ENCODE measurements at regions of chr6 and their contacts with region 1.

Region 1: DNA sequence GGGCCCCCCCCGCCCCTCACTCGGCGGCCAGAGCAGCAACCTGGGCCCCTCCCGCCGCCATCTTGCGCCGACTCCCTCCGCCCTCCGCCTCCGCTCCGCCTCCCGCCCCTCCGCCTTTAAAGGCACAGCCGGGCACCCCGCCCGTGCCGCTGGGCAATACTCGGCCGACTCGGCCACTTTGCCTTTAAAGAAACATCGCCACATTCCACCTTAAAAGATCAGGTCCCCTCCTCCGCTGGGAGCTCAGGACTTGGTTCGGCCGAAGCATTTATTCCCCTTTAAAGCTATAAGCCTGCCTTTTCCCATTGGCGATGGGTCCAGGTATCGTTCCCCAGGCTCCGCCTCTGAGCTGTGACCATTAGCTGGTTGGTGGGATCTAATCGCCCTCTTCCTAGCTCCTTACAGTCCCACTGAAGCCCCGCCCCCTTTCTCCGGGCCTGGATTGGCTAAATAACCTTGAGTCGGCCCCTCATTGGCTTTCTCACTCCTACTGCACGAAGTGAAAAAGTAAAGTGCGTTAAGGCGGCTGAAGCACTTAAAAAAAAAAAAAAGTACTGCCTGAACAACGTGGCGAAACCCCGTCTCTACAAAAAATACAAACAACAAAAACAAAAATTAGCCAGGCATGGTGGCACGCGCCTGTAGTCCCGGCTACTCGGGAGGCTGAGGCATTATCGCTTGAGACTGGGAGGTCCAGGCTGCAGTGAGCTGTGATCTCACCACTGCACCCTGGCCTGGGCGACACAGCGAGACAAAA is at the start of gene ZBTB22:
- DNase-seq: peak; percentile 94
- ATAC-seq: peak; percentile 69
- H3K4me3 Mint-ChIP-seq: peak within 1 kb of the TSS; percentile 100
- H3K27ac Mint-ChIP-seq: peak within 1 kb of the TSS; percentile 98
- H3K4me1 Mint-ChIP-seq: peaks cover 54% of the 10 kb centered on the region
- H3K27me3 Mint-ChIP-seq: no peaks in the 10 kb centered on the region
- total RNA-seq, gene ZBTB22: 20.9 to 24.5 TPM

Region 2: GRCh38 chr6:31474871-31475286 is 1843.0 kb before region 1 on chr6:
- POLR2A ChIA-PET with region 1: no interaction called
- DNase-seq: no peak
- ATAC-seq: no peak
- H3K4me3 Mint-ChIP-seq: no peak overlapping the region
- H3K27ac Mint-ChIP-seq: no peak overlapping the region
- H3K4me1 Mint-ChIP-seq: peaks cover 16% of the 10 kb centered on the region
- H3K27me3 Mint-ChIP-seq: no peaks in the 10 kb centered on the region

Region 3: DNA sequence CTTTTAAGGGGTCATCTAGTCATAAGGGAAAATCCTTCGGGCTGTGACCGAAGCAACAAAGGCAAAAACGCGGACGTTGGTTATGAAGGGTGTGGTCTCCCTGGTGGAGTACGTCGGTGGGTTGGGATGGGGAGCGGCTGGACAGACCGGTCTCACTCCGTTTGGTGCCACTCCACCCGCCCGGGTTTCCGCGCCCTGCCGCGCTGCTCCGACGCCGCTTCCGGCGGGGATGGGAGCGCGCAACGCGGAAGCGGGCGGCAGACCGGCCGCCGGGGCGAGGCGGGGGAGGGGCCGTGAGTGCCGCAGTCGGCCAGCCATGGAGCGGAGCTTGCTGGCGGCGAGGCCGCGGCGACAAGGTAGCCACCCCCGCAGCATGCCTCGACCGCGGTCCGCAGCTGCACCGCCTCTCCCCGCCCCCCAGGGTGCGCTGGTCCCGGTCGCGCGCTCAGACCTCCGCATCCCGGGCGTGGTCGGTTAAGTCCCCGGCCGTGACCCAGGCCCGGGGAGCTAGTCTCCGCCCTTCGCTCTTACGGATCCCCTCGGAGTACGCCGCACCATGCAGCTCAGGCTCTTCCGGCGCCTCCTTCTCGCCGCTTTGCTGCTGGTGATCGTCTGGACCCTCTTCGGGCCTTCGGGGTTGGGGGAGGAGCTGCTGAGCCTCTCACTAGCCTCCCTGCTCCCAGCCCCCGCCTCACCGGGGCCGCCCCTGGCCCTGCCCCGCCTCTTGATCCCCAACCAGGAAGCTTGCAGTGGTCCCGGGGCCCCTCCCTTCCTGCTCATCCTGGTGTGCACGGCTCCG is 40.8 kb before region 1 on chr6 and contains the start of gene B3GALT4:
- POLR2A ChIA-PET with region 1: interaction called, 20 read pairs
- DNase-seq: peak; percentile 86
- ATAC-seq: peak; percentile 76
- H3K4me3 Mint-ChIP-seq: peak within 1 kb of the TSS; percentile 97
- H3K27ac Mint-ChIP-seq: peak within 1 kb of the TSS; percentile 98
- H3K4me1 Mint-ChIP-seq: peaks cover 46% of the 10 kb centered on the region
- H3K27me3 Mint-ChIP-seq: no peaks in the 10 kb centered on the region
- total RNA-seq, gene B3GALT4: 32.0 to 35.4 TPM

Region 4: DNA sequence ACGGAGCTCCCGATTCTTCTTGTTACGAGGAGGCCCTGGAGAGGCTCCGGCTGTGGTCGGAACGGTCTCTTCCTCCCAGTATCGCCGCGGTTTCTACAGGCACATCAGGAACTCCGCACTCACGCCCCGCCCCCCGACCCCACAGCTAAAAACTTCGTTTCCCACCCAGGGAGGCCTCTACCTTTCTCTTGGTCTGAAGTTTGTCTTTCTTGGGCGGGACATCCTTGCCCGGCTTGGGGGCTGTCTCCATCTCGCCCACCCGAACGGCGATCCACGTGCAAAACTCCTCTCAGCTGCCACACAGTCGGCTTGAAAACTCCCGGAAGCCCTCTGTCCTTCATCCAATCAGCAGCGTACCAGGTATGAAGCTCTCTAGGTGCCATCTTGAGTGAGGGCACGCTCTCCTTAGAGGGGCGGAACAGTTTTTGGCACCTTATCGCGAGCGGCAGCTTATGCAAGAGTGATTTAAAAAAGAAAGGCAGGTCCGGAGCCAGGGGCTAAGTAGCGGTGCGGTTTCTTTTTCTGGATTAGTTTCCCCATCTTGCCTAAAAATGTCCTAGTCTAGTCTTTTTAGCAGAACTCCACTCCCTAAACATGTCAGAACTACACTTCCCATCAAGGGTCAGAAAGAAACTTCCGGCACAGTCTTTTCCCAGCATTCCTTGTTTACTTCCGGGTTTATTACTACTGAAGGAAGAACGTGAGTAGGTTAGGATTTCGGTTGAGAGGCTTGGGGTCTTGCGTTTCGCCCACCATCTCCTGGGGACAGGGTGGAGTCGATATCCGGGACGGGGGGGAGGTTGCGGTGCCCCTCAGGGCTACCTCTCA is 28.7 kb before region 1 on chr6 and contains the starts of genes PFDN6 and WDR46:
- POLR2A ChIA-PET with region 1: interaction called, 21 read pairs
- DNase-seq: peak; percentile 74
- ATAC-seq: peak; percentile 97
- H3K4me3 Mint-ChIP-seq: peak within 1 kb of the TSS; percentile 96
- H3K27ac Mint-ChIP-seq: peak within 1 kb of the TSS; percentile 90
- H3K4me1 Mint-ChIP-seq: peaks cover 31% of the 10 kb centered on the region
- H3K27me3 Mint-ChIP-seq: no peaks in the 10 kb centered on the region
- total RNA-seq, gene PFDN6: 53.3 to 54.7 TPM
- total RNA-seq, gene WDR46: 50.0 to 58.0 TPM

Region 5: GRCh38 chr6:33299237-33299944 is 18.5 kb before region 1 on chr6:
- POLR2A ChIA-PET with region 1: interaction called, 44 read pairs
- DNase-seq: peak; percentile 94
- ATAC-seq: peak; percentile 85
- H3K4me3 Mint-ChIP-seq: peak overlapping the region; percentile 99
- H3K27ac Mint-ChIP-seq: peak overlapping the region; percentile 99
- H3K4me1 Mint-ChIP-seq: peaks cover 20% of the 10 kb centered on the region
- H3K27me3 Mint-ChIP-seq: no peaks in the 10 kb centered on the region

Region 6: DNA sequence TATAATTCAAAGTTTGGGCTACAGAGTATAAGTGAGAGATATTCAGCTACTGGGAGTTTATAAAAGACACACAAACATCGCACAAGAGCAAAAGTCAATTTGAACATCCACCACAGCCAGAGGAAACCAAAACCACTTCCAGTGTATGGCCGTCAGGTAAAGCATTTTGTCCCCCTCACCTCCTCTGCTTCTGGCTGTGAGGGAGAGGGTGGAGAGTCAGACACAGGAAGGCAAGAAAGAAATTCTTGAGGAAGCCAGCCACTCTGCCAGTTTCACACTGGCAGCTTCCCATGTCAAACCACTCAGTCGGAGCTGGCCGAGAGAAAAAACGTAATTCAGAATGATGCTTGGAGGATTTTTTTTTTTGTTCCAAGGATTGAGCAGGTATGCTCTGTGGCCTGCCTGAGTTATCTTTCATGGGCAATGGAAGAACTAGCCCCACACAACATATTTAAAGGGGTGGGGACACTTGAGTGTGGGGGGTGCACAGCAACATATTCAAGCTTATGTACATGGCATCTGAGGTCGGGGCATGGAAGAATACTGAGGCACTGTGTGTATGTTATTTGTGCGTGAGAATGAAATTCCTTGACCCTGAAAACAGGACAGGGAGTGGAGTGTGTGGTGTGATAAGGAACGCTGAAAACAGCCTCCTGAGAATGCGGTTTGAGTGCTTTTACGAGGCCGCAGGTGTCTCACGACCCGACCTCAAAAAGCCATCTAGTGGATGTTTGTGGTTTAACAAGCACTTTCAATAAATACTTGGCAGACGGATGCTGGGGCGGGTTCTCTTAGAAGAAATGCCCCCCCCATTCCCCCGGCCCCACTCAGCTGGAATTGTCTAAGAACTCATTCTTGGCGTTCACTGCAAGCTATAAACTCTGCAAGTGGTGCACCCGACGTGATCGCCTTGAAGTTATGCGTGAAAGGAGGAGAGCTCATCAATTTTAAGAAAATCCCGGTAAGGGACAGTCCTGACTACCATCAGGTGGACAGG is 27.2 kb after region 1 on chr6:
- POLR2A ChIA-PET with region 1: interaction called, 67 read pairs
- DNase-seq: peak; percentile 61
- ATAC-seq: peak; percentile 68
- H3K4me3 Mint-ChIP-seq: peak overlapping the region; percentile 74
- H3K27ac Mint-ChIP-seq: peak overlapping the region; percentile 87
- H3K4me1 Mint-ChIP-seq: peaks cover 28% of the 10 kb centered on the region
- H3K27me3 Mint-ChIP-seq: no peaks in the 10 kb centered on the region

Region 7: DNA sequence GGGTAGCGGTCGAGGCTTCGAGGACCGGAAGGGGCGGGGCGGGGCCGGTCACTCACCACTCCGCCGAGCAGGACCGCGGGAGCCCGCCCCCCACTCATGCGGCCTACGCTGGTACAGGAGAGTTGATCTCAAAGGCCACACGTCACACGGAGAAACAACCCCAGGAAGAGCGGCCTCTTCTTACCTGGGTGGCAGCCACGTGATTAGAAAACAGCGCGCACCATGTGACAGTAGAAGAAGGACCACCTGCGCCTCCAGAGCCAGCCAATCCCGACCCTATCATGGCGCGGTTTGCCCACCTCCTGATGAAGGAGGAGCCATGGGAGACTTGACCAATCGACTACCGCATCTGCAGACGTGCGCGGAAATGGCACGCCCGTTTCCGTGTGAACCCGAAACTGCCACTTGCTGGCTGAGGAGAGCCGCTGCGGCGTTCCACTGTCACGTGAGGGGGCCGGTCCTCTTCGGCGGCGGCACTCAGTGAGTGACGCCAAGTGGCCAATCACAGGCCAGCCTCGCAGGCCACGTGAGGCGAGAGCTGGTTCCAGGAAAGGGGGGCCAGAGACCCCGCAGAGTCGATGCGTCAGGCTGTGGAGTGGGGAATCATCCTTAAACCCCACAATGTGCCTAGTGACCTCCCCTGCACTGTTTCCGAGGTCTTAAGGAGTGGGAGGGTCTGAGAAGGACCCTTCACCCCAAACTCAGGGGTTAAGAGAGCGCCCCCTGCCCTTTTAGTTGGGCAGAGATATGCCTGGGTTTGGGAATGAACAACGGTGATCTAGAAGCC is 100.2 kb after region 1 on chr6 and contains the start of gene CUTA:
- POLR2A ChIA-PET with region 1: interaction called, 10 read pairs
- DNase-seq: peak; percentile 98
- ATAC-seq: peak; percentile 89
- H3K4me3 Mint-ChIP-seq: peak within 1 kb of the TSS; percentile 96
- H3K27ac Mint-ChIP-seq: peak within 1 kb of the TSS; percentile 97
- H3K4me1 Mint-ChIP-seq: peaks cover 48% of the 10 kb centered on the region
- H3K27me3 Mint-ChIP-seq: peaks cover 3% of the 10 kb centered on the region
- total RNA-seq, gene CUTA: 202 to 209 TPM

Measured in activated naive CD8-positive, alpha-beta T cell treated with anti-CD3 and anti-CD28 coated beads, Interleukin-2, amount 10 ng/mL, durations not matched to agents 7 days and 5 days (primary cell).